ENCODE measurements at regions of chr5 and their contacts with region 1.

Region 1: DNA sequence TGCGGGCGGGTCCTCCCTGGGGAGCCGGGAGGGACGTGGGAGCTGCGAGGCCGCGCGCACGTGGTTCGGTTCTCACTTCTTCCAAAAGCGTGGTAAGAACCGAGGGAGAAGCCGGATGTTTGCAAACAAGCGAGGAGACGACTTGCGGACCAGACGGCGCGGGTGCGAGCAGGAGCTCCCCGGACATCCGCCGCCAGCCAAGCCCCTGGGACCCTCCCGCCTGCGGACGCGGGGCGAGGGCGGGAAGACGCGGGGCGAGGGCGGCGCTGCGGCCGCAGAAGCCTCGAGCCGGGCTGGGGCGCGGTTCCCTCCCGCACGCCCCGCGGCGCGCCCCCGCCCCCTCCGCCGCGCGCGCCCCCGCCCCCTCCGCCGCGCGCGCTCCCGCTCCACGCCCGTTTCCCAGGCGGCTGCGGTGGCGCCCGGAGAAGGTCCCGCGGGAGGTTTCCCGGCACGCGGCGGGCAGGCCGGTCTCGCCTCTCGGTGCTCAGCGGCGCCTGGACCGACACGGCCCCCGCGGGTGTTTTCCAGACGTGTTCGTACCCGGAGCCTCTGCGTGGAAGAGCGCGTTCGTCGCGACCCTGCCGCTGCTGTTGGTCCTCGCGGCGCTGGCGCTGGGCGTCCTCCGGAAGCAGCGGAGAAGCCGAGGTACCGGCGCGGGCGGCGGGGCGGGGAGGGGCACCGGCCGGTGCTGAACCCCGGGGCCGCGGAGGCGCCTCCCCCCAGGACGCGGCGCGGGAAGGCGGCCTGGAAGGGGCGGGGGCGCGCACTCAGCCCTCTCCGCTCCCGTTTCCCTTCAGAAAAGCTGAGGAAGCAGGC is 12.8 kb downstream of the BTNL9 start:
- DNase-seq: peak; percentile 43
- ATAC-seq: peak; percentile 31
- H3K4me3 Mint-ChIP-seq: peak overlapping the region; percentile 90
- H3K27ac Mint-ChIP-seq: no peak overlapping the region
- H3K4me1 Mint-ChIP-seq: peaks cover 32% of the 10 kb centered on the region
- H3K27me3 Mint-ChIP-seq: peaks cover 88% of the 10 kb centered on the region
- CTCF ChIP-seq: no peak

Region 2: GRCh38 chr5:180718810-180719453 is 333.9 kb before region 1 on chr5:
- CTCF ChIA-PET with region 1: no interaction called
- POLR2A ChIA-PET with region 1: no interaction called
- DNase-seq: no peak
- ATAC-seq: no peak
- H3K4me3 Mint-ChIP-seq: no peak overlapping the region
- H3K27ac Mint-ChIP-seq: no peak overlapping the region
- H3K4me1 Mint-ChIP-seq: no peaks in the 10 kb centered on the region
- H3K27me3 Mint-ChIP-seq: no peaks in the 10 kb centered on the region; the same call in 1 of the 2 replicates
- CTCF ChIP-seq: no peak

Region 3: GRCh38 chr5:180868960-180869359 is 183.9 kb before region 1 on chr5:
- CTCF ChIA-PET with region 1: interaction called, 10 read pairs
- POLR2A ChIA-PET with region 1: no interaction called
- DNase-seq: peak; percentile 92
- ATAC-seq: peak; percentile 87
- H3K4me3 Mint-ChIP-seq: no peak overlapping the region
- H3K27ac Mint-ChIP-seq: peak overlapping the region; percentile 67; the same call in 1 of the 2 replicates
- H3K4me1 Mint-ChIP-seq: peaks cover 24% of the 10 kb centered on the region
- H3K27me3 Mint-ChIP-seq: no peaks in the 10 kb centered on the region; the same call in 1 of the 2 replicates
- CTCF ChIP-seq: peak; percentile 73

Measured in WTC11 (cell line).